Left lung (tissue), 14 donors: ENCODE measurements at regions of chr11 and their contacts with region 1.

Region 1: DNA sequence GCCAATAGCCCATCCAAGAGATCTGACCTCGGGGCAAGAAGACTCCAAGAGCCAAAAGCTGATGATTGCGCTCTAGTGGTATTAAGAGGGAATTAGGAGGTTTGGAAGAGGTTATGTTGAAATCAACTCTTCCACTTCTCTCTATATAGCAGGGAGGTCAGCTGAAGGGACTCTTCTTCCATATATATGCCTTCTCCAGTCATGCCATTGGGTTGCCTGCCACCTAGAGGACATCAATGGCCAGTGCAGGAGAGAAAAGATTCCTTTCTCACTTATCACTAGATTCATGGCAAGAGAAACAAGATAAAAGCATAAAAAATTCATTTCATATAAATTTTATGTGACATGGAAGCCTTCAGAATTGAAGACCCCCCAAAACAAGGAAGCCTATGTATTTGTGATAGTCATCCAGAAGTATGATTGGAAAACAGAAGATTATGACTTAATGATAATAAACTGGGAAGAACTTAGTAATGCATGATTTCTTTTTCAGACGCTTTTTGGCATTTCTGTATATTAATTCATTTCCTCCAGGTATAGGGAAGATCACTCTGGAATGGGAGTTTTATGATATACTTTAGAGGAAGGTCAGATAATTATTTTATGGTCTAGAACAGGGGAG is 435.1 kb upstream of the DDI1 start:
- DNase-seq: peak in 2 of 4 donors; percentile 28 to 50
- ATAC-seq: peak; percentile 98
- H3K4me3 ChIP-seq: no peak overlapping the region
- H3K27ac ChIP-seq: no peak overlapping the region
- H3K4me1 ChIP-seq: no peaks in the 10 kb centered on the region
- H3K27me3 ChIP-seq: no peaks in the 10 kb centered on the region
- CTCF ChIP-seq: peak; percentile 74 to 86

Region 2: DNA sequence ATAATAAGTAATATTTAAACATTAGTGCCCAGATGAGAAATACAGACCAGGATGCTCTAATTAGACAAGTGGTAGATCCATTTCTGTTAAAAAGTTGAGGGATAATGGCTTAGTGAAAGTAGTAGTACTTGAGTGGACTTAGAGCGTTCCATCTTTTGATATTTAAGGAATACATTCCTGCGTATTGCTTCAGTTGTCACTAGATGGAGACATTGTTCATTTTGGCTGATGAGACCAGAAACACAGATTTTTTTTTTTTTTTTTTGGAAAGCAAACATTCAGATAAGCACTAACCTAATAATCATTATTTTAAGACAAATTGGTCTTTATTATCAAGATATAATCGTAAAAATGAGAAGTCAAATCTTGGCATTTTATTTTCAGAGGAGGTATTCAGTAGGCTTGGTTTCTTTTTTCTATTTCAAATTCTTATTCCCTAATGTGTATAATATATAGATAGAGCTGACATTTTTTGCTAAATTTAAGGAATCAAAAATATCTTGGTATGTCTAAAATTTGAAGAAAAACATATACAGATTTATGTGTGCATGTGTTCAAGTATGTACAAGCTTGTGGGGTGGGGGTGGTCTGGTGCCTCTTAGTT is 399.2 kb before region 1 on chr11:
- intact Hi-C with region 1: loop called in 1 of 2 experiments (anchors 10 kb)
- DNase-seq: peak in 2 of 4 donors; percentile 20 to 51
- ATAC-seq: peak; percentile 64
- H3K4me3 ChIP-seq: no peak overlapping the region
- H3K27ac ChIP-seq: no peak overlapping the region
- H3K4me1 ChIP-seq: no peaks in the 10 kb centered on the region
- H3K27me3 ChIP-seq: no peaks in the 10 kb centered on the region
- CTCF ChIP-seq: no peak